ENCODE measurements at regions of chr1 and their contacts with region 1.

Region 1: GRCh38 chr1:20786253-20787028 is 666 bp downstream of the HP1BP3 start:
- DNase-seq: peak; percentile 90 to 97
- H3K4me3 ChIP-seq: peak overlapping the region; percentile 75 to 88
- H3K27ac ChIP-seq: peak overlapping the region; percentile 98
- H3K4me1 ChIP-seq: peaks cover 0 to 42% (median 24%) of the 10 kb centered on the region in 4 donors
- H3K27me3 ChIP-seq: no peaks in the 10 kb centered on the region
- CTCF ChIP-seq: no peak

Region 2: DNA sequence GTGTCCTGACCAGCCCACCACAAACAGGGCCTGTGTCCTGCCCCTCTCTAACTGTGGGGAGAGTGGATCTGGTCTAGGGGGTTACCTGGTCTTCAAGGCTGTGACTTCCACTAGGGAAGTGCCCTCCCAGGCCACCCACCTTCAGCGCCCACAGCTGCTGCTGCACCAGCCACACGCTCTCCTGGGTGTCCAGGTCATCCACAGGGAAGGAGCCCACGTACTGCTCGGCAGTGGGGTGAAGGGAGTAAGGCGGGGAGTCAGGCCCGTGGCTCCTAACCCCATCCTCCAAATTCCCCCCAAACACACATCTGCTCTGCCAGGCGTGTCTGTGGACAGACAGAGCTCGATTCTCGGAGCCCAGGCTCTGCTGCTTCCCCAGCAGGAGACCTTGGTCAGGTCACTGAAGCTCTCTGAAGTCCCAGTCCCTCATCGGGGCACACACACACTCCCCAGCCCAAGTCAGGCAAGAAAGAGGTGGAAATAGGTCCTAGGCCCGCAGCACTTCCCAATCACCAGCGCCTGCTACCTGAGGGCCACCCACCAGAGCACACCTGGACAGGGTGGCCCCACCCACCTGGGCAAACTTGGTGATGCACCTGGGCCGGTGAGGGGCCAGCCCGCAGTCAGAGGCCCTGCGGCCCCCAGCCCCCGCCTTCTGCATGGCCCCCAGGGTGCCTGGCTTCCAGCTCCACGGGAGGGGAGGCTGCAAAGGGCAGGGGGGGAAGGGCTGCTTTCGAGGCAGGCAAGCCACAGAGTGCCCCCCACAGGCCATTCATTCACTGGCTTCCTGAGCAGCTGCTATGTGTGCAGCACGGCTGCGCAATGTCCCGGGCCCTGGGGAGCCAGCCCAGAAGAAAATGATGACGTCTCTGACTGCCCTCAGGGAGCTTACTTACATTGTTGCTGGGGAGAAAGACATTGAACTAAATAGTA is 58.8 kb before region 1 on chr1:
- intact Hi-C with region 1: loop called (anchors 5 kb)
- DNase-seq: no peak
- H3K4me3 ChIP-seq: no peak overlapping the region
- H3K27ac ChIP-seq: no peak overlapping the region
- H3K4me1 ChIP-seq: peaks cover 0 to 28% (median 14%) of the 10 kb centered on the region in 4 donors
- H3K27me3 ChIP-seq: peaks cover 0 to 48% of the 10 kb centered on the region in 2 donors
- CTCF ChIP-seq: no peak